GM10248 (cell line): ENCODE measurements at regions of chr1 and their contacts with region 1.

Region 1: DNA sequence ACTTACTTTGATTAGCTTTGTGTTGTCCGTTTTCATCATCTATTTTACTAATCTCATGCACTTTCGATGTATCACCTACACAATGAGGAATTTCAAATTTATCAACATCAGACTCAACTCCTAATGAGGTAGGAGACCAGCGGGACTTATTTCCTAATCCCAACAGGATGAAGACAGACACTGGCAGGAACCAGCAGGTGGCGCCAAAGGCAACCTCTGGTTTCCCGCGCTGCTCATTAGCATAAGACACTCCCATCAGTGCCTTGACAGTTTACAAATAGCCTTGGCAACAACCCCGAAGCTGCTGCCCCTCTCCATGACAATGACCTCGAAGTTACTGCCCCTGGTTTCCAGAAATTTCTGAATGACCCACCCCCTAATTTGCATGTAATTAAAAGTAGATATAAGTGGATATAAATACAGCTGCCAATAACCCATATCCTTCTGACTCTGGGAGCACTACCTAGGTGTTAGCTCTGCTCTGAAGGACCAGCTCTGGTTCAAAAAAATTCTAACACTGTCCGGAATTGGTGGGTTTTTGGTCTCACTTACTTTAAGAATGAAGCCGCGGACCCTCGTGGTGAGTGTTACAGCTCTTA is 974.8 kb downstream of the ADGRL2 start:
- DNase-seq: no peak
- CTCF ChIP-seq: peak; percentile 21

Region 2: DNA sequence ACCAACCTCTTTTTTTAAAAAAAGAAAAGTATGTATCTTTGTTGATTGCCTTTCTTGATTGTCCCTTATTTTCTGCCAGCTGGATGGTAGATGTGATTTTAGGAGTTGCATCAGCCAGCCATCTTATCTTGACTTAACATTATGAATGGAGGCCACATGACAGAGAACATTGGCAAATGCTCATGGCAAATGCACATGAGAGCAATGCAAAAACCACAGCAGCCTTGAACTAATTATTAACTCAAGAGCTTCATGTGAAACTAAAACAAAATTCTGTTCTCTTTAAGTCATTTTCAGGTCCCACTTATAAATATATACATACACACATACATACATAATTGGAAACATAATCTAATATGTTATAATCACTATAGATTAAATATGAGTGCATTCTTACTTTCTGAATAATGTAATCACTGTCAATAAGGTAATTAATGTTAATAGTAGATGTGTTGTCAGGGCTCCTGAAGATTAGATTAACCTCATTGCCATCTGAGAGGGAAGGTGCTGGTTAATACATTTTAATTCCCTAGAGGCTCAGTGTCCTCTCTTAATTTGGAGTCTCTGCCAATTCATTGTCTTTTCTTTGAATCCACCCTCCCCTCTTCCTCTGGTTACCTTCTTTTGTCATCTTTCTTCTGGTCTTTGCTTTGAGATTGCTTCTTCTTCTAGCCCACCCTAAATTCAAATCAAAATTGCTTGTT is 12.5 kb before region 1 on chr1:
- CTCF ChIA-PET with region 1: interaction called, 12 read pairs
- POLR2A ChIA-PET with region 1: no interaction called
- DNase-seq: no peak
- CTCF ChIP-seq: no peak